B cell (primary cell): ENCODE measurements at regions of chr12 and their contacts with region 1.

Region 1: DNA sequence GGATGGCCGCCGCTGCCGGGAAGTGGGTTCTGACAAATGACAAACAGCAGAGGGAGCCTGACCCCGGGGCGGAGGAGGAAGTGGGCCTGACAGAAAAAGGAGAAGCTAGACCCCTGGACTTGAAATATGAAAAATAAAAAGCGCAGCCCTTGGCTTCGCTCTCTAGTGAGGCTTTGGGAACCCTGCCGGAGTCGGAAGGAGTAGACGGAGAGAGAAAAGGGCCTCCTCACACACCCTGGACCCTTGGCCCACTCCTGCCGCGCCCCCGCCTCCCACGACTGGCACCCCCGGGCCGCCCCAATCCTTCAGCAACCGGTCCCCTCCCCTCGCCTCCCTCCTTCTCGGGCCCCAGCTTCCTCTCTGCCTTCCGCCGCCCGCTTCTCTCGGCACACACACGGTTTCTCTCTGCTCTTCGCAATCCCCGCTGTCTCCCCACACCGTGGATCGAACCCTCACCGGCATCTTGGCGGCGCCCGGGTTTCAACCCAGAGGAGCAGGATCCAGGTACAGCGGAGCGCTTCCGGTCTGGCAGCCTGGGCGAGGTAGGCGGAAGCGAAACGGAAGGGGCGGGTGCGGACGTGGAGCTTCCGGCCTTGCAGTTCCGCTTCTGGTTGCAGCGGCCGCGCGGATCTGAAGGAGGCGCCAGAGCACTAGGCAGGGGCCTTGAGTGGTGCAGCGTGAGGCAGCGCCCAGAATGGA is at the start of gene ARPC3:
- DNase-seq: peak; percentile 97
- ATAC-seq: peak; percentile 89
- H3K4me3 ChIP-seq: peak within 1 kb of the TSS; percentile 78 to 96 (median 96)
- H3K4me3 Mint-ChIP-seq: peak within 1 kb of the TSS; percentile 98
- H3K27ac ChIP-seq: peak within 1 kb of the TSS; percentile 96 to 98
- H3K27ac Mint-ChIP-seq: peak within 1 kb of the TSS; percentile 100
- H3K4me1 ChIP-seq: peaks cover 36 to 50% of the 10 kb centered on the region in 2 donors
- H3K4me1 Mint-ChIP-seq: peaks cover 42% of the 10 kb centered on the region
- H3K27me3 ChIP-seq: no peaks in the 10 kb centered on the region
- H3K27me3 Mint-ChIP-seq: no peaks in the 10 kb centered on the region
- CTCF ChIP-seq: peak; percentile 84
- total RNA-seq, gene ARPC3: 360 and 374 TPM in 2 replicates

Region 2: DNA sequence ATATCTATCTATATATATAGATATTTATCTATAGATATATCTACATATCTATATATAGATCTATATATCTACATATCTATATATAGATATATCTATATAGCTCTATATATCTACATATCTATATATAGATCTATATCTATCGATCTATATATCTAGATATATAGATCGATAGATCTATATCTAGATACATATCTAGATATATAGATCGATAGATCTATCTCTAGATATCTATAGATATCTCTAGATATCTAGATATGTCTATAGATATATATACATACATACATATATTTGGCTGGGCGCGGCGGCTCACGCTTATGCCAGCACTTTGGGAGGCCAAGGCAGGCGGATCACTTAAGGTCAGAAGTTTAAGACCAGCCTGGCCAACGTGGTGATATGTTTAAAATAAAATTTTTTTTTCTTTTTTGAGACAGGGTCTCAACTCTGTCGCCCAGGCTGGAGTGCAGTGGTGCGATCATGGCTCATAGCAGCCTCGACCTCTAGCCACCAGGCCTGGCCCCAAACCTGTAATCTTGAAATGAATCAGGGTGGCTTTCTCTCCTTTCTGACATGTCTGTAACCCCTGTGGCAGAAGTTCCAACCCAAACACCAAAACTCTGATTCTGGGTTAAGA is 17.9 kb before region 1 on chr12:
- CTCF ChIA-PET with region 1: interaction called, 30 read pairs
- POLR2A ChIA-PET with region 1: interaction called, 11 read pairs
- intact Hi-C with region 1: no loop called
- DNase-seq: no peak
- ATAC-seq: no peak
- H3K4me3 ChIP-seq: peak overlapping the region in 3 of 5 experiments; percentile 37 to 54 (median 51)
- H3K4me3 Mint-ChIP-seq: no peak overlapping the region
- H3K27ac ChIP-seq: peak overlapping the region; percentile 5 to 21
- H3K27ac Mint-ChIP-seq: no peak overlapping the region
- H3K4me1 ChIP-seq: peaks cover 0 to 5% of the 10 kb centered on the region in 2 donors
- H3K4me1 Mint-ChIP-seq: peaks cover 2% of the 10 kb centered on the region
- H3K27me3 ChIP-seq: no peaks in the 10 kb centered on the region
- H3K27me3 Mint-ChIP-seq: no peaks in the 10 kb centered on the region
- CTCF ChIP-seq: no peak

Region 3: DNA sequence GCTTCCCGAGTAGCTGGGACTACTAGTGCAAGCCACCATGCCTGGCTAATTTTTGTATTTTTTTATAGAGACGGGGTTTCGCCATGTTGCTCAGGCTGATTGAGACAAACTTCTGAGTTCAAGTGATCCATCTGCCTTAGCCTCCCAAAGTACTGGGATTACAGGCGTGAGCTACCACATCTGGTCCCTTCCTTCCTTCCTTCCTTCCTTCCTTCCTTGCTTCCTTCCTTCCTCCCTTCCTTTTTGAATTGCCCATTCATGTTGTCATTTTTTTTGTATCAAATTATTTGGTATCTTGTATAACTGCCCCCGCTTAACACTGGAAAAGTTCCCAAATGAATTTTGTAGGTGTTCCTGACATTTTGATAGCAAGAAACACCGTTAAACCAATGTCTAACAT is 63.9 kb after region 1 on chr12:
- CTCF ChIA-PET with region 1: interaction called, 36 read pairs
- POLR2A ChIA-PET with region 1: interaction called, 4 read pairs
- intact Hi-C with region 1: no loop called
- DNase-seq: no peak
- ATAC-seq: no peak
- H3K4me3 ChIP-seq: no peak overlapping the region
- H3K4me3 Mint-ChIP-seq: no peak overlapping the region
- H3K27ac ChIP-seq: no peak overlapping the region
- H3K27ac Mint-ChIP-seq: no peak overlapping the region
- H3K4me1 ChIP-seq: no peaks in the 10 kb centered on the region
- H3K4me1 Mint-ChIP-seq: no peaks in the 10 kb centered on the region
- H3K27me3 ChIP-seq: no peaks in the 10 kb centered on the region
- H3K27me3 Mint-ChIP-seq: no peaks in the 10 kb centered on the region
- CTCF ChIP-seq: no peak

Region 4: GRCh38 chr12:110583137-110584059 is 133.4 kb after region 1 on chr12 and contains the start of gene PPTC7:
- CTCF ChIA-PET with region 1: interaction called, 4 read pairs
- POLR2A ChIA-PET with region 1: interaction called, 3 read pairs
- intact Hi-C with region 1: loop called (anchors 1 kb)
- DNase-seq: peak; percentile 98
- ATAC-seq: peak; percentile 95
- H3K4me3 ChIP-seq: peak within 1 kb of the TSS; percentile 74 to 93 (median 87)
- H3K4me3 Mint-ChIP-seq: peak within 1 kb of the TSS; percentile 94
- H3K27ac ChIP-seq: peak within 1 kb of the TSS; percentile 88 to 96
- H3K27ac Mint-ChIP-seq: peak within 1 kb of the TSS; percentile 92
- H3K4me1 ChIP-seq: peaks cover 55 to 64% of the 10 kb centered on the region in 2 donors
- H3K4me1 Mint-ChIP-seq: peaks cover 69% of the 10 kb centered on the region
- H3K27me3 ChIP-seq: no peaks in the 10 kb centered on the region
- H3K27me3 Mint-ChIP-seq: no peaks in the 10 kb centered on the region
- CTCF ChIP-seq: no peak
- total RNA-seq, gene PPTC7: 44.9 and 45.6 TPM in 2 replicates

Region 5: GRCh38 chr12:110698171-110698902 is 248.4 kb after region 1 on chr12:
- CTCF ChIA-PET with region 1: interaction called, 6 read pairs
- POLR2A ChIA-PET with region 1: interaction called, 3 read pairs
- intact Hi-C with region 1: loop called (anchors 2 kb)
- DNase-seq: peak; percentile 90
- ATAC-seq: peak; percentile 100
- H3K4me3 ChIP-seq: peak overlapping the region in 2 of 5 experiments; percentile 21 to 29
- H3K4me3 Mint-ChIP-seq: peak overlapping the region; percentile 64
- H3K27ac ChIP-seq: peak overlapping the region in 1 of 2 donors; percentile 58
- H3K27ac Mint-ChIP-seq: peak overlapping the region; percentile 94
- H3K4me1 ChIP-seq: peaks cover 36 to 37% of the 10 kb centered on the region in 2 donors
- H3K4me1 Mint-ChIP-seq: peaks cover 47% of the 10 kb centered on the region
- H3K27me3 ChIP-seq: no peaks in the 10 kb centered on the region
- H3K27me3 Mint-ChIP-seq: no peaks in the 10 kb centered on the region
- CTCF ChIP-seq: peak; percentile 82

Region 6: DNA sequence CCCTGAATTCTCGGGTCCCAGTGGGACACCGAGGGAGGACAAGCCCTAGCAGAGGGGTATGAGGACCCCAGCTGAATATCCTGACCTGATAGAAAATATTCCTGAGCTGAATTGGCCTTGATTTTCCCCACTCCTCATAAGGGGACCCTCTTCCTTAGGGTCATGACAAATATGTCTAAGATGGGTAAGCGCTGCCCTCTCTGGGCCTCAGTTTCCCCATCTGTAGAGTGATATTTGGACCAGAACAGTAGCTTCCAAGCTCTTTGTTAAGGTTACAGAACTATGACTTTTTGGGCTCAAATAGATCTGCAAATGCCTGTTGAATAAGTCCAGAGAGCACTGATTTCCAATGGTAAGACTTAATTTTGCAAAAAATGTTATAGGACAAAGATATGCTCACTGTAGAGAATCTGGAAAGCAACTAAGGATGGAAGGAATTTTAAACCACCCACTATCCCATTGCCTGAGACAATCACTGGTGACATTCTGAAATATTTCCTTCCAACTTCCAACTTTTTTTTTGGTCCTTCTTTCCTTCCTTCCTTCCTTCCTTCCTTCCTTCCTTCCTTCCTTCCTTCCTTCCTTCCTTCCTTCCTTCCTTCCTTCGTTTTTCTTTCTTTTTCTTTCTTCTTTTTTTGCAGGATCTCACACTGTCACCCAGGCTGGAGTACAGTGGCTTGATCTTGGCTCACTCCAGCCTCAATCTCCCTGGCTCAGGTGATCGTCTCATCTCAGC is 438.5 kb after region 1 on chr12:
- CTCF ChIA-PET with region 1: interaction called, 51 read pairs
- POLR2A ChIA-PET with region 1: interaction called, 4 read pairs
- intact Hi-C with region 1: no loop called
- DNase-seq: no peak
- ATAC-seq: no peak
- H3K4me3 ChIP-seq: peak overlapping the region in 1 of 5 experiments; percentile 62
- H3K4me3 Mint-ChIP-seq: peak overlapping the region; percentile 95
- H3K27ac ChIP-seq: no peak overlapping the region
- H3K27ac Mint-ChIP-seq: peak overlapping the region; percentile 43
- H3K4me1 ChIP-seq: peaks cover 0 to 10% of the 10 kb centered on the region in 2 donors
- H3K4me1 Mint-ChIP-seq: peaks cover 4% of the 10 kb centered on the region
- H3K27me3 ChIP-seq: no peaks in the 10 kb centered on the region
- H3K27me3 Mint-ChIP-seq: no peaks in the 10 kb centered on the region
- CTCF ChIP-seq: peak; percentile 62